ENCODE measurements at regions of chr1 and their contacts with region 1.

Region 1: GRCh38 chr1:39609618-39610331 is 29.7 kb downstream of the HEYL start:
- DNase-seq: peak; percentile 96
- ATAC-seq: peak; percentile 96
- H3K4me3 Mint-ChIP-seq: peak overlapping the region; percentile 83
- H3K27ac Mint-ChIP-seq: no peak overlapping the region
- H3K4me1 Mint-ChIP-seq: peaks cover 3% of the 10 kb centered on the region; the same call in 1 of the 2 replicates
- H3K27me3 Mint-ChIP-seq: peaks cover 60% of the 10 kb centered on the region
- CTCF ChIP-seq: peak; percentile 94

Region 2: DNA sequence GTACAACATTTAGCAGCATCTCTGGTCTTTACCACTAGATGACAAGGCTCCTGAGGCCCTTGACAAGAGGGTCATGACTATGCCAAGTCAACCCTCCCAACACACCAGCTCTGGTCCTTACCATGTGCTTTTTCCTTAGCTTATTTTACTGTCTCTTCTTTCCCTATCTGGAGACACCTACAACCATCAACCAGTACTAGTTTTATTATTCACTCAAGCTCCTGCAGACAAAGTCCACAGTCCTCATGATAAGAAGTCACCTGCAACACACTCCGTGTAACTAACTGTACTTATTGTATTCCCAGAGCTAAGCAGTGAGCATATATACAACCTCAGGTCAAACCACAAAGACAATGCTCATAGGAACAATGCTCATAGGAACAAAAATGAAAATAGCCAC is 48.5 kb before region 1 on chr1:
- CTCF ChIA-PET with region 1: no interaction called
- POLR2A ChIA-PET with region 1: no interaction called
- DNase-seq: no peak
- ATAC-seq: no peak
- H3K4me3 Mint-ChIP-seq: no peak overlapping the region
- H3K27ac Mint-ChIP-seq: no peak overlapping the region
- H3K4me1 Mint-ChIP-seq: no peaks in the 10 kb centered on the region
- H3K27me3 Mint-ChIP-seq: no peaks in the 10 kb centered on the region
- CTCF ChIP-seq: no peak

Region 3: DNA sequence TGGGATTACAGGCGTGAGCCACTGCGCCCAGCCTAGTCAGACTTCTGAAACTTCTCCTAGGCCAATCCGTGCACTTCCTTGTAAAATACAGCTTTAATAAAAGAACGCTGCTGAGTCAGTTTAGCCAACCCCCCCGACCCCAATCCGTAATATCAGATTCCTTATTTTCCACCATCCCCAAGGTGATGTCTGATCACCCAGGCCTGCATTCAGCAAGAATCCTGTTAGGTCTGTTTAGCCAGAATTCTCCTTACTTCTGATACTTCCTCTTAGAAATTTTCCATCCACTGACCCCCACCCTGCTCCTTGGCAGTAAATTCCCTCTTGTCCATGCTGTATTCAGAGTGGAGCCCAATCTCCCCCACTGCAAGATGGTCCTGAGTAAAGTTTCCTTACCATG is 21.7 kb before region 1 on chr1:
- CTCF ChIA-PET with region 1: interaction called, 10 read pairs
- POLR2A ChIA-PET with region 1: no interaction called
- DNase-seq: no peak
- ATAC-seq: no peak
- H3K4me3 Mint-ChIP-seq: no peak overlapping the region
- H3K27ac Mint-ChIP-seq: no peak overlapping the region
- H3K4me1 Mint-ChIP-seq: peaks cover 9% of the 10 kb centered on the region
- H3K27me3 Mint-ChIP-seq: peaks cover 40% of the 10 kb centered on the region
- CTCF ChIP-seq: no peak

Region 4: DNA sequence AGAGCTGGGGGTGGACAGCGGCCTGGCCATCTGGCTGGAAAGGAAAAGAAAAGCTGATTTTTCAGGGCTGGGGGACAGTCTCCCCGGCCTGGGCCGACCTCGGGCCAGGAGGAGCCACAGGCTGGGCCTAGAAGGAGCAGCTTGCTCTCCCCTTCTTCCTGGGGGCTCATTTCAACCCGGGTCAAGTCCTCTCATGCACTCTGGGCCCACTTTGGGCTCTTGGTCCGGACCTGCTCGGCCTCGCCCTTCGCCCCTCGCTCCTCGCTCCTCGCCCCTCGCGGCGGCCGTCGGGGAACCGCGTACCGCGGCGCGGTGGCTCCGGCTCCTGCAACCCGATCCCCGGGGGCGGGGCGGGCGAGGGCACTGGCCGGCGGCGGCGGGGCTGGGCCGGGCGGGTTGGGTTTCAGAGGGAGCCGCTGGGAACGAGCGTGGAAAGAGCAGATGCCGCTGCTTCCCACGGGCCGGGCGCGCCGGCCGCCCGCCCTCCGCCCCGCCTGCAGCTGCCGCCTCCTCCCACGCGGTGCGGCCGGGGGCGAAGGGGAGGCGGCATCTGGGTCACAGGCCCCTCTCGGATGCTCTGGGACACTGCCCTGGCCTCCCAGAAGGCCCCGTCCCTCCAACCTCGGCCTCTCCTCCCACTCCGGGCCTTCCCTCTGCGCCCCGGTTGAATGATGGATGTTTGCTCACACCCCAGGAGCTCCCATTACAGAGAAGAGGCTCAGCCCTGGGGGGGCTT is 23.1 kb after region 1 on chr1:
- CTCF ChIA-PET with region 1: interaction called, 44 read pairs
- POLR2A ChIA-PET with region 1: no interaction called
- DNase-seq: peak; percentile 79
- ATAC-seq: peak; percentile 89
- H3K4me3 Mint-ChIP-seq: peak overlapping the region; percentile 65
- H3K27ac Mint-ChIP-seq: no peak overlapping the region
- H3K4me1 Mint-ChIP-seq: peaks cover 21% of the 10 kb centered on the region
- H3K27me3 Mint-ChIP-seq: peaks cover 89% of the 10 kb centered on the region
- CTCF ChIP-seq: no peak

Region 5: DNA sequence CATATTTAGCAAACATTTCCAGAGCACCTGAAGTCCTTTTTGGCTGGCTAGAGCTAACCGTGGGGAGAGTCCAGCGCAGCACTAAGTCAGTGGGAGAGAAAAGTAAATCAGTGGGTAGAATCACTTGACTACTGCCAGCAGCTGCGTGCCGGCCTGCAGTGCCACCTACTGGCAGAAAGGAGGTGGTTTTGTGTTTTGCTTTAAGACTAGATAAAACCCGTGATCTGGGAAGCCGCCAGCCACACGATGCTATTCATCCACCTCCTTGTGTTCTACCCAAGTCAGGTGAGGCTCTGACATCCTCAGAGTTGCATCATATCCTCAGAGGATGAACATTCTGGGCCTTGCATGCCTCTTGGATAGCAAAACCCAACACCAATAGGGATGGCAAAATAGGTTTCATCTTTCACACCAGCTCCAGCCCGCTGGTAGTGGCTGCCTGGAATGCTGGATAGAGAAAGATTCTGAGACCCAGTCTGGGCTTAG is 43.8 kb after region 1 on chr1:
- CTCF ChIA-PET with region 1: interaction called, 124 read pairs
- POLR2A ChIA-PET with region 1: interaction called, 6 read pairs
- DNase-seq: peak; percentile 83
- ATAC-seq: peak; percentile 64
- H3K4me3 Mint-ChIP-seq: no peak overlapping the region
- H3K27ac Mint-ChIP-seq: no peak overlapping the region
- H3K4me1 Mint-ChIP-seq: peaks cover 5% of the 10 kb centered on the region
- H3K27me3 Mint-ChIP-seq: peaks cover 71% of the 10 kb centered on the region
- CTCF ChIP-seq: peak; percentile 67

Region 6: DNA sequence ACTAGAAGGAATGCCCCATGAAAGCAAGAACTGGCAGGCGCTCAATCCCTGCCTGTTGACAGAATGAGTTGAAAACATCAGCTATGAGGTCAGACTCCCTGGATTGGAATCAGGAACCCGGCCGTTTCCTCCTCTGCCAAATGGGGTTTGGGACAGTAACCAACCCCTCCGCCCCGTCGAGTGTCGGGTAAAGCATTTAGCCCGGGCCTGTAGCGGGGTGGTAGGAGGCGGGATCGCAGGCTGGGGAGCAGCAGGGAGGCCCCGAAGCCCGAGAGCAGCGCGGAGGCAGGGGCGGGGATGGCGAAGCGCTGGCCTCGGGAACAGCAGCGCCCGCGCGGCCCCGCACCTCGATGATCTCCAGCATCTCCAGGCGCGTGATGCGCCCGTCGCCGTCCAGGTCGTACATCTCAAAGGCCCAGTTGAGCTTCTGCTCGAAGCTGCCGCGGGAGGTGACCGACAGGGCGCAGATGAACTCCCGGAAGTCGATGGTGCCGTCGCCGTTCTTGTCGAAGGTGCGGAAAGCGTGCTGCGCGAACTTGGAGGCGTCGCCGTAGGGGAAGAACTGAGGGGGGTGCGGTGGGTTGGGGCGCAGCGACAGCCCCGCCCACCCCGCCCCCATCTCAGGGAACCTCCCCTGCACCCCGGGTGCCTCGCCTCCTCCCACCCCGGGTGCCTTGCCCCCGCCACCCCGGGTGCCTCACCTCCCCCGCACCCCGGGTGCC is 74.0 kb after region 1 on chr1:
- CTCF ChIA-PET with region 1: interaction called, 10 read pairs
- POLR2A ChIA-PET with region 1: no interaction called
- DNase-seq: peak; percentile 50
- ATAC-seq: peak; percentile 81
- H3K4me3 Mint-ChIP-seq: peak overlapping the region; percentile 29; the same call in 1 of the 2 replicates
- H3K27ac Mint-ChIP-seq: no peak overlapping the region
- H3K4me1 Mint-ChIP-seq: no peaks in the 10 kb centered on the region; the same call in 1 of the 2 replicates
- H3K27me3 Mint-ChIP-seq: peaks cover 100% of the 10 kb centered on the region
- CTCF ChIP-seq: no peak

Region 7: GRCh38 chr1:39711104-39711965 is 101.6 kb after region 1 on chr1:
- CTCF ChIA-PET with region 1: interaction called, 24 read pairs
- POLR2A ChIA-PET with region 1: no interaction called
- DNase-seq: no peak
- ATAC-seq: peak; percentile 17; the same call in 1 of the 2 replicates
- H3K4me3 Mint-ChIP-seq: no peak overlapping the region
- H3K27ac Mint-ChIP-seq: no peak overlapping the region
- H3K4me1 Mint-ChIP-seq: peaks cover 12% of the 10 kb centered on the region
- H3K27me3 Mint-ChIP-seq: peaks cover 100% of the 10 kb centered on the region
- CTCF ChIP-seq: no peak

Region 8: DNA sequence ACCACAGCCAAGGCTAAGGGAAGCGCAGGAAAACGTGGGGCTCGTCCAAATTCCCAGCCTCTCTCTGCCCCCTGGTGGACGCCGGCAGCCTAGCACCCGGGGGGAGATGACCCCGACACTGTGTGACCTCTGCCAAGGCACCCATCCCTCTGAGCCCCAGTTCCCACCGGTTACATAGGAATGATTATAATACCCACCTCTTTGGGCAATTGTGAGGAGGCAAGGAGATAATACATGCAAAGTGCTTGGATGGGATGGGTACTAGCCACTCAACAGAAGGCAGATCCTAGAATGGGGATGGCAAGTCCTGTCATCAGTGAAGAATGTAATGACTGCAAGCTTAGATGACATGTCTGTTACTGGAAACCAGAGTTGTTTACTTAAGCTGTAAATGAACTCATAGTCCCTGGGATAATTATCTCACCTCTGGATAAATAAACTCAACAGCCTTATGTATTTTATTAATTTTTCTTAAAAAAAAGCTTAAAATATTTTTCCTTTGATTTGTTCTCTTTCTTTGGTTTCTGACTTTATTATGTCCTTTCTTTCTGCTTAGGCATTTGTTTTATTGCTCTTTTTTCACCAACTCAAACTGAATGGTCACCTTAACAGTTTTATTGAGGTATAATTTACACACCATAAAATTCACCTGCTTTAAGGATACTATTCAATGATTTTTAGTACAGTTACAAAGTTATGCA is 190.1 kb after region 1 on chr1:
- CTCF ChIA-PET with region 1: interaction called, 16 read pairs
- POLR2A ChIA-PET with region 1: no interaction called
- DNase-seq: peak; percentile 88
- ATAC-seq: peak; percentile 92
- H3K4me3 Mint-ChIP-seq: no peak overlapping the region
- H3K27ac Mint-ChIP-seq: no peak overlapping the region
- H3K4me1 Mint-ChIP-seq: peaks cover 9% of the 10 kb centered on the region
- H3K27me3 Mint-ChIP-seq: peaks cover 21% of the 10 kb centered on the region
- CTCF ChIP-seq: peak; percentile 87